ENCODE measurements at regions of chr11 and their contacts with region 1.

Region 1: DNA sequence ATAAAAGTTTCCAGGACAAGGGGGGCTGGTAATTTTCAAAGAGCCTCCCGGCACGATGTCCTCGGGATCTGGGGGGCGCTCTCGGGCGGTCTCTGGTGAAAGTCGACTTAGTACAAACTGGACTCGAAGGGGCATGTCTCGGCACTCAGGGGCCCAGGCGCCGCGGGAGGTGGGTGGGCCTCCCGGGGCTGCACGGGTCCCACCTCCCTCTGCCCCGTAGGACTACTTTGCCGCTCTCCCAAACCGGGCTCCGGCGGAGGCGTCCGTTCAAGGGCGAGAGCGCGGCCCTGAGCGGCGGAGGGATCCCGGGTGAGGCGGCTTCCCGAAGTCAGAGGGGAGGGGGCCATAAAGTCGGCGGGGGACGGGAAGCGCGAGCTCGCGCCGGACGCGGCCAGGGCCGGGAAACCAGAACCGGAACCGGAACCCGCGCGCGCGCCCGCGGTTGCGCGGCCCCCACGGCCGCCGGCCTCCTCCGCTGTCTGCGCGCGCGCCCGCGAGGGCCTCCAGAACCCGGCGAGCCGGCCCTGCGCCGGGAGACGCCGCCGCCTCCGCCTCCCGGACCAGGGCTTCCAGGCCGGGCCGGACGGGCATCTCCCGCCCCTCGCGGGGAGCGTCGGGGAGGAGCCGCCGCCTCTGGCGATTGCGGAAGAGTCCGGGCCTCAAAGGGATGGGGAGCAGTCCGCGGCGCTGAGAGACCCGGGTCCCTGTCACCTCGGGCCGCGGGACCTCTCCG is at the start of gene ARHGEF12:
- DNase-seq: peak; percentile 97 to 98 (median 98)
- H3K4me3 ChIP-seq: peak within 1 kb of the TSS; percentile 67
- H3K27ac ChIP-seq: peak within 1 kb of the TSS; percentile 93 to 95
- H3K4me1 ChIP-seq: peaks cover 5% of the 10 kb centered on the region
- H3K27me3 ChIP-seq: no peaks in the 10 kb centered on the region
- CTCF ChIP-seq: peak in 1 of 3 donors; percentile 36
- EP300 ChIP-seq: peak; percentile 83
- POLR2A ChIP-seq: peak; percentile 84
- total RNA-seq, gene ARHGEF12: 66.0 to 92.9 (median 81.6) TPM

Region 2: DNA sequence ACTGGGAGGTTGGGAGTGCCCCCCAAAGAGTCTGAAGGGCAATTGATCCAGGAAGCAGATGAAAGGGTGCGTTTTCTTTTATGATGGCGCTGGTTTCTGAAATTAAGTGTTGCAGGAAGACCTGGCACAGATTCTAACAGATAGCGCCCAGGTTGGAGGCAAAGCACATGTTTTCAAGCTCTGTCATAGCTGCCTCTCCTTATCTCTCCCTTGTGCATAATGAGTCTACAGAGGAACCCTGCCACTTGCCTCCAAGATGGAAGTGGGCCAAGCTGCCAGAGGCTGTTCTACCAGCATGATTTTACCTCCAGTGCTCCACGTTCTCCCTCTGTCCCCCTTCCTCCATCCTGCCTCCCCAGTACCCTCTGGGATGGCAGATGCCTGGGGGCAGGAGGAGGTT is 41.0 kb before region 1 on chr11:
- intact Hi-C with region 1: no loop called
- DNase-seq: no peak
- H3K4me3 ChIP-seq: no peak overlapping the region
- H3K27ac ChIP-seq: no peak overlapping the region
- H3K4me1 ChIP-seq: no peaks in the 10 kb centered on the region
- H3K27me3 ChIP-seq: no peaks in the 10 kb centered on the region
- CTCF ChIP-seq: no peak
- EP300 ChIP-seq: no peak
- POLR2A ChIP-seq: no peak

Region 3: DNA sequence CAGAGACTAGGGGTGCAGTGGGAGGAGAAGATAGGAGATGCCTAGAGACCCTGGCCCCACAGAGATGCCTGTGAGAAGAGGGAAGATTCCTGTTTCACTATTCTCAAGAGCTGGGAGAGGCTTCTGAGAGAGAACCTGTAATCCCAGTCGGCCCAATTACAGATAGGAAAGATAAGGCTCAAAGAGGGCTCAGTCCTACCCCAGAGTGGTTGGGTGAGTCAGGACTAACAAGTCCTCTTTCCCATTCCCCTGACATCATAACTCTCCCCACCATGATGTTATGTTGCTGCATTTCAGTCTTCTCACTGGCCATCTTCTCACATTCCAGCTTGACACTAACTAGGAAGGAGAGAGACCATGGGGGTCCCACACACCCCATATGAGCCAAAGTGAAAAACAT is 18.0 kb after region 1 on chr11:
- intact Hi-C with region 1: no loop called
- DNase-seq: no peak
- H3K4me3 ChIP-seq: no peak overlapping the region
- H3K27ac ChIP-seq: no peak overlapping the region
- H3K4me1 ChIP-seq: peaks cover 9% of the 10 kb centered on the region
- H3K27me3 ChIP-seq: no peaks in the 10 kb centered on the region
- CTCF ChIP-seq: no peak
- EP300 ChIP-seq: no peak
- POLR2A ChIP-seq: no peak

Region 4: DNA sequence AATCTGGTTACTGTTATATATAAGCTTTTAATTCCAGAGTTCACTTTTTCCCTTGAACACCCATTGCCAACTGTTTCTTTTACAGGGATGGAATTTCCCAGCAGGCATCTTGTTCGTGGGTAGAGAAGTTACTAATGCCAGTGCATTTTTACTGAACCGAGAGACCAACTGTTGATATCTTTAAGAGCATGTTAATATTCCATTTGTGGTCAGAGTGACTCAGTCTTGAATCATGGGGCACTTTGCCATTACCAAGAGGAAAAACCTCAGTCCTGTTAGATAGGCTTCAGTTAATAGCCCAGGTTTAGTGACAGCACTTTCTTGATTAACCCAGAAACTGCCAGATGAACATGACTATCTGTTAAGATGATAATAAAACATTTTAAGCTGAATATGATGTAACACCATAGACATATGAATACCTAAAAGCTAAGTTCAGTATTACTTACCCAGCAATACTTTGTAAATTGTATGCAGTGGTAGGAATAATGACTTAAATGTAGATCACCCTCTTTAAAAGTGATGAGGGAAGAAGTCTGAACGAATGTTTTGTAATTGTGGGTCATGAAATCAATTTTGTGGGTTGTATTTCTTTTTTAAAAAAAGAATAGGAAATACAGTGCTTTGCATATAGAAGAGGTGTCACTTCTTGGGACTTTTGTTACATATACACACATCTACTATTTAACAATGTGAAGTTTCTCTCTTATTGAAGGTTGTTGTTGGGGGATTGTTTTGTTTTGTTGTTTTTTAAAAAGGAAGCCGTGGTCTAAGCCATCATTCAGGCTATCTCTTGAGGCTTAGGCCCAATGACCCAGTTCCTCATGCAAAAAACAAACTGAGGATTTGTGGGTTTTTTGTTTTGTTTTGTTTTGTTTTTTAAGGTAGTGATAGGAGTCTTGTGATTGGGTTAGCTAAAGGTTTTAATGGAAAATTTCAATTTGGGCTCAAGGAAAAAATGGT is 96.3 kb after region 1 on chr11:
- intact Hi-C with region 1: loop called in 3 of 4 experiments (anchors 10 kb)
- DNase-seq: peak in 1 of 5 donors; percentile 35
- H3K4me3 ChIP-seq: no peak overlapping the region
- H3K27ac ChIP-seq: peak overlapping the region in 1 of 2 donors; percentile 17
- H3K4me1 ChIP-seq: peaks cover 1% of the 10 kb centered on the region
- H3K27me3 ChIP-seq: no peaks in the 10 kb centered on the region
- CTCF ChIP-seq: no peak
- EP300 ChIP-seq: no peak
- POLR2A ChIP-seq: no peak

Measured in ovary (tissue), 10 donors.